ENCODE measurements at regions of chr1 and their contacts with region 1.

Region 1: DNA sequence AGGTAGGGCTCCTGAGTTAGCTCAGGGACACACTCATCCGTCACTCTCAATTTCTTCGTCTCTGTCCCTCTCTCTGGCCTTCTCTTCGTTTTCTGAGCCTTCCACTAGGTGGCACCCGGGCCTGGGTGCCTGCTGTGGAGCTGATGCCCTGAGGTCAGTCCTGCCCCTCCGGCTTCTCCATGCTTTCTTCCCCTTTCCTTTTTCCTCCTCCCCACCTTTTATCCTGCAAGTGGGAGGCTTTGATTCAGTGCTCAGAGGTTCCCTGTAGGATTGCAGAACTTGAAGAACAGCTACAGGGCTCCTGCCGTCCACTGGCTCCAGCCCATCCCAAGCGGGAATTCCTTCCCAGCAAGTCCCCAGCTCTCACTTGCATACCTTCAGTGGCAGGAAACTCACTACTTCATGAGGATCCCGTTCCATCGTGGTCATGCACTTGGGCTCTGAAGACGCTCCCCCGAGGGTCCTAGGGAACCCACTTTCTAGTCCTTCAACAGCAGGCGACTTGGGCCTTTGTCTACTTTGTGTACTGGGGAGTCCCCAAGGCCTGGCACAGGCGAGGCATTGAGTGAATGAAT is 45.6 kb downstream of the SRRM1 start:
- DNase-seq: no peak
- H3K4me3 ChIP-seq: no peak overlapping the region
- H3K27ac ChIP-seq: no peak overlapping the region
- H3K4me1 ChIP-seq: peaks cover 12% of the 10 kb centered on the region
- H3K27me3 ChIP-seq: no peaks in the 10 kb centered on the region
- CTCF ChIP-seq: peak; percentile 63 to 86 (median 80)
- POLR2A ChIP-seq: no peak

Region 2: GRCh38 chr1:24830680-24831272 is 142.1 kb after region 1 on chr1:
- intact Hi-C with region 1: loop called (anchors 5 kb)
- DNase-seq: no peak
- H3K4me3 ChIP-seq: no peak overlapping the region
- H3K27ac ChIP-seq: no peak overlapping the region
- H3K4me1 ChIP-seq: peaks cover 38% of the 10 kb centered on the region
- H3K27me3 ChIP-seq: no peaks in the 10 kb centered on the region
- CTCF ChIP-seq: peak; percentile 74 to 82 (median 77)
- POLR2A ChIP-seq: no peak

Measured in vagina (tissue), 2 donors.